ENCODE measurements at regions of chr20 and their contacts with region 1.

Region 1: DNA sequence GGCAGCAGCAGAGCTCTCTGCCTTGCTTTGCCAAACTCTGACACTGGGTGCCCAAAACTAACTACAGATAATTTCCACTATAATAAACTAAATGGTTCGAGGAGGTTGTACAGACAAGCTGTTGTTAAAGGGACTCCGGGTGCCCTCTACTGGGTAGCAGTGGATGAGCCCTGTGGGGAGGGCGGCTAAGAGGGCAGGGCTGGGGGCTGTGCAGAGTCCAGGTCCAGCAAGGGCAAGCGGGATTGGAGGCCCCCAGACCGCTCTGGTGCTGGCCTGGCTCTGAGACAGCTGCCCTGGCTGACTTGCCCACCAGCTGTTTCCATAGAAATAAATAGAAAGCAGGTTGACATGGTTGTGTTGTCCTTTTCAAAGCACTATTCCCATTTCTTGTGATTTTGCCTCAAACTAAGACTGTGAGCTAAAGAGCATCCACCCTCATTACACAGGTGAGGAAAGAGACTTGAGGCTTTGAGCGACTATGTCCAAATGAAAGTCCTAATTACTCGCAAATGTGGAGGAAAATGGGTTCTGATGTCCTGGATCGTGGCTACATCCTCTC is 167.6 kb upstream of the CST7 start:
- DNase-seq: peak in 1 of 2 donors; percentile 18
- ATAC-seq: peak in 7 of 8 donors; percentile 32 to 84 (median 70)
- H3K4me3 ChIP-seq: no peak overlapping the region
- H3K27ac ChIP-seq: no peak overlapping the region
- H3K4me1 ChIP-seq: no peaks in the 10 kb centered on the region
- H3K27me3 ChIP-seq: peaks cover 0 to 16% (median 3%) of the 10 kb centered on the region in 7 donors
- CTCF ChIP-seq: peak; percentile 14 to 63 (median 46)

Region 2: DNA sequence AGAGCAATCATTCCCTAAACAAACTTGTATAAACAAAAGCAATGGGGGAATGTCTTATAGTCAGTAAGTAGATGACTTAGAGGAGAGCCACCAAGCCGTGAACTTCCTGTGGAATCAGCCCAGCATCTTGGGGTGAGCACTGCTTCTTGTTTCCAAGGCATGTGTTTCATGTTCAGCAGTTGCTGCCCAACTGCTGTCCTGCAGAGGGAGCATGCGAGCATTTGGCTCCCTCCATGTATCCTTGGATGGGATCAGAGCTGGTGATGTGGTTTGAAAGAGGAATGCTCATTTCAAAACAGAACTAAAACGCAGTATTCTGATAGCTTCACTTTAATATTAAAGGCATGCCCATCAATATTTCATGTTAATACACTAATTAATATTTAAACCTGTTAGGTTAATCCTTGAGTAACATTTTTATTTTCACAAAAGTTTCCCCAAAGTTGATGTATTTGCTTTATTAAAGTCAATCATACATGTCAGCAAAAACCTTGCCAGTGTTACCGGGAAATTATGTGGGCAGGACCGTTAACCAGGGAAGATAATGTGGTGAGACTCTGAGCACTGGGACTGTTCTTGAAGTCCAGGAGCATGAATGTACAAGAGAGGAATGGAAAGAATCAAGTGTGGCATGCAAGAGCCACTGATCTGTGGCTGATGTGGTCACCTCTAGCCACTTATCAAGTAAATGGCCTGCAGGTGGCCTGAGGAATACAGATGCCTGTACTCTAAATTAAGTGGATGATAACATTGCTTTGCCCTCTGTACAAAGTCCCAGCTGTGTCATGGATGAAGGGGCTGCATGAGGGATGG is 620.7 kb before region 1 on chr20:
- intact Hi-C with region 1: loop called in 4 of 10 experiments (anchors 5 to 10 kb)
- DNase-seq: peak; percentile 22 to 38
- ATAC-seq: peak in 5 of 8 donors; percentile 53 to 76 (median 67)
- H3K4me3 ChIP-seq: no peak overlapping the region
- H3K27ac ChIP-seq: no peak overlapping the region
- H3K4me1 ChIP-seq: no peaks in the 10 kb centered on the region
- H3K27me3 ChIP-seq: peaks cover 0 to 6% (median 0%) of the 10 kb centered on the region in 7 donors
- CTCF ChIP-seq: peak; percentile 40 to 78 (median 72)

Region 3: DNA sequence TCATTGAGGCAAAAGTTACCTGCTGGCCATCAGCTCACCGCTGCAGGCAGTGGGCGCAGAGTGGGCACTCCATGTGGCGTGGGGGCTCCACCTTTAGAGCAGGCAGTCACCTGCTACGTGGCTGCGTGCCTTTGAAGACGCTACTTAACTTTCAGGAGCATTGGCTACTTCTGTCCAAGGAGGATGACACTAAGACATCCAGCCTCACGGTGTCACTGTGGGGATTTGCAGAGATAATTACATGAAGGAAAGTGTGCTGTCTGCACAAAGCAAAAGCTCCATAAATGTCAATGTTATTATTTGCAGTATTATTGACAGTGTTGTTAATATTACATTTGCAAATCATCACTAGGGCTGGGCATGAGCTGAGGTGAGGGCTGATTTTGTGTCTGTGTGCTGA is 478.1 kb before region 1 on chr20:
- intact Hi-C with region 1: loop called in 4 of 10 experiments (anchors 5 to 10 kb)
- DNase-seq: no peak
- ATAC-seq: no peak
- H3K4me3 ChIP-seq: no peak overlapping the region
- H3K27ac ChIP-seq: no peak overlapping the region
- H3K4me1 ChIP-seq: no peaks in the 10 kb centered on the region
- H3K27me3 ChIP-seq: peaks cover 0 to 28% (median 4%) of the 10 kb centered on the region in 7 donors
- CTCF ChIP-seq: peak in 6 of 9 donors; percentile 12 to 40 (median 28)

Region 4: DNA sequence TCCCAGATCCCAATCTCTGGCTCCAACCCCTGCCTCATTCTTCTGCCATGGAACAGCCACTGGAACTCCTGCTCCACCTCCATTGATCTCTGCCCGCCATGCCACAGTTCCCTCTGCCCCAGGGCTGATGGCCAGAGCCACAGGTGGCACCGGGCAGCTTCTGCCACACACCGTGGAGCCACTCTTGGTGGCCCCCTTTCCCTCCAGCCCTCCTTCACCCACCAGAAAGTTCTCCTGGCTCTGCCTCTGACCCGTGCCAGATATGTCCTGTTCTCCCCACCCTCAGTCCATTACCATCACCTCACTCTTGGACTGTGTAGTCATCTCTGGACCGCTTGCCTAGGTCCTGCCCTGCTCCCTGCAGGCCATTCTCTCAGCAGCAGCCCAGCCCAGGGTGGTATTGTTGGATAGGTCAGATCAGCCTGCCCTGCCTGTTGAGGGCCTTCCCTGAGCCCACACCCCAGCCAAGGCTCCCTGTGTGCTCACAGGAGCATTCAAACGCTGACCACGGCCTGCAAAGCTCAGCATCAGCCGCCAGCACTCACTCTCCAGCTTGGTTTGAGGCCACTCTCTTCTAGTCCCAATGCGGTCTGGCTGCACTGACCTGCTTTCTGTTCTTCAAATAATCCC is 328.9 kb before region 1 on chr20:
- intact Hi-C with region 1: loop called in 1 of 10 experiments (anchors 10 kb)
- DNase-seq: no peak
- ATAC-seq: peak in 1 of 8 donors; percentile 18
- H3K4me3 ChIP-seq: no peak overlapping the region
- H3K27ac ChIP-seq: no peak overlapping the region
- H3K4me1 ChIP-seq: no peaks in the 10 kb centered on the region
- H3K27me3 ChIP-seq: peaks cover 0 to 20% (median 4%) of the 10 kb centered on the region in 7 donors
- CTCF ChIP-seq: no peak

Region 5: DNA sequence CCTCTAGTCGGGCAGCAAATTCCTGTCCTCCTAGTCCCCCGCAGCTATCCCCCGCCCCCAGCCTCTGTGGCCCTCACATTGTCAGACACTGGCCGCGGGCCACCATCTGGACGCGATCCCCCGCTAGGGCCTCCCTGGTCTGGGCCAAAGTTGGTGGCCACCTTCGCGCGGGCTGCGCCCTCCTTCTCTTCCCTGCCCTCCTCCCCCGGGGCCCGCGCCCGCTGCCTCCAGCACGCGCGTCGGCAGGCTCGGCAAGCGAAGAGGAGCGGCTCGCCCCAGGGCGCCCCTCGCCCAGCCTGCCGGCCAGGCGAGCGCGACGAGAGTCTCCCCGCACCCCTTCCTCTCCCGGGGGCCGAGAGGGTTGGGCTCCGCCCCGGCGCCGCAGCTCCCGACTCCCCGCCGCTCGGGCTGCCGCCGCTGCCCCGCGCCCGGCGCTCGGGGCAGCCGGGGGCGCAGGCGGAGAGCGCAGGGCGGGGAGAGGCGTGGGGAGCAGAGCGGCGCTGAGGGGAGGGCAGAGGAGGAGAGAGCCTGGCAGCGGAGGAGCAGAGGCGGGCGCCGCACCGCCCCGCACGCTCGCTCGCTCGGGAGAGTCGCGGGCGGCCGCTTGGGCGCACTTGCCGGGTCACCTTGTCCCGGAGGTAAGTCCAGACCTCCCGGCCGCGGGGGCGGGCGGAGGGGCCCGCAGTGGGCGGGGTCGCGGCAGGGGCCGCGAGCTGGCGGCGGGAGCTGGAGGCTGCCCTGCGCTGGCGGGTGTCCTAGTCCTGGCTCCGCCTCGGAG is 312.2 kb before region 1 on chr20 and contains the start of gene SYNDIG1:
- intact Hi-C with region 1: loop called in 1 of 10 experiments (anchors 10 kb)
- DNase-seq: peak; percentile 24 to 54
- ATAC-seq: peak; percentile 37 to 77 (median 51)
- H3K4me3 ChIP-seq: peak within 1 kb of the TSS; percentile 38 to 65 (median 58)
- H3K27ac ChIP-seq: peak within 1 kb of the TSS; percentile 20 to 92 (median 77)
- H3K4me1 ChIP-seq: peaks cover 0 to 41% (median 9%) of the 10 kb centered on the region in 9 donors
- H3K27me3 ChIP-seq: peaks cover 0 to 63% (median 45%) of the 10 kb centered on the region in 7 donors
- CTCF ChIP-seq: no peak
- total RNA-seq, gene SYNDIG1: 8.7 to 34.7 (median 22.6) TPM